ENCODE measurements at regions of chr11 and their contacts with region 1.

Region 1: GRCh38 chr11:1460396-1460985 is 26.1 kb downstream of the MOB2 start:
- DNase-seq: peak; percentile 48
- H3K4me3 ChIP-seq: peak overlapping the region; percentile 3 to 18
- H3K27ac ChIP-seq: peak overlapping the region; percentile 80
- H3K4me1 ChIP-seq: peaks cover 7% of the 10 kb centered on the region
- H3K27me3 ChIP-seq: no peaks in the 10 kb centered on the region
- CTCF ChIP-seq: no peak
- POLR2A ChIP-seq: no peak

Region 2: GRCh38 chr11:842370-843002 is 618.0 kb before region 1 on chr11 and contains the starts of genes POLR2L and TSPAN4:
- intact Hi-C with region 1: loop called (anchors 10 kb)
- DNase-seq: peak; percentile 83
- H3K4me3 ChIP-seq: peak within 1 kb of the TSS; percentile 82 to 94
- H3K27ac ChIP-seq: peak within 1 kb of the TSS; percentile 89 to 90
- H3K4me1 ChIP-seq: peaks cover 20% of the 10 kb centered on the region
- H3K27me3 ChIP-seq: no peaks in the 10 kb centered on the region
- CTCF ChIP-seq: peak in 2 of 4 experiments; percentile 19 to 34
- POLR2A ChIP-seq: peak; percentile 84
- total RNA-seq, gene POLR2L: 64.5 to 91.1 TPM
- total RNA-seq, gene TSPAN4: 48.8 to 94.9 TPM

Region 3: GRCh38 chr11:1486114-1486825 is 25.8 kb after region 1 on chr11 and contains the start of gene MOB2:
- intact Hi-C with region 1: loop called (anchors 2 kb)
- DNase-seq: no peak
- H3K4me3 ChIP-seq: peak within 1 kb of the TSS; percentile 9 to 17
- H3K27ac ChIP-seq: peak within 1 kb of the TSS; percentile 27 to 41
- H3K4me1 ChIP-seq: peaks cover 10% of the 10 kb centered on the region
- H3K27me3 ChIP-seq: no peaks in the 10 kb centered on the region
- CTCF ChIP-seq: peak in 1 of 4 experiments; percentile 12
- POLR2A ChIP-seq: no peak
- total RNA-seq, gene MOB2: 39.3 to 46.5 TPM

Region 4: GRCh38 chr11:1502954-1503707 is 42.6 kb after region 1 on chr11:
- intact Hi-C with region 1: no loop called
- DNase-seq: peak; percentile 88
- H3K4me3 ChIP-seq: no peak overlapping the region
- H3K27ac ChIP-seq: peak overlapping the region; percentile 64 to 75
- H3K4me1 ChIP-seq: peaks cover 36% of the 10 kb centered on the region
- H3K27me3 ChIP-seq: no peaks in the 10 kb centered on the region
- CTCF ChIP-seq: peak in 1 of 4 experiments; percentile 4
- POLR2A ChIP-seq: no peak

Region 5: DNA sequence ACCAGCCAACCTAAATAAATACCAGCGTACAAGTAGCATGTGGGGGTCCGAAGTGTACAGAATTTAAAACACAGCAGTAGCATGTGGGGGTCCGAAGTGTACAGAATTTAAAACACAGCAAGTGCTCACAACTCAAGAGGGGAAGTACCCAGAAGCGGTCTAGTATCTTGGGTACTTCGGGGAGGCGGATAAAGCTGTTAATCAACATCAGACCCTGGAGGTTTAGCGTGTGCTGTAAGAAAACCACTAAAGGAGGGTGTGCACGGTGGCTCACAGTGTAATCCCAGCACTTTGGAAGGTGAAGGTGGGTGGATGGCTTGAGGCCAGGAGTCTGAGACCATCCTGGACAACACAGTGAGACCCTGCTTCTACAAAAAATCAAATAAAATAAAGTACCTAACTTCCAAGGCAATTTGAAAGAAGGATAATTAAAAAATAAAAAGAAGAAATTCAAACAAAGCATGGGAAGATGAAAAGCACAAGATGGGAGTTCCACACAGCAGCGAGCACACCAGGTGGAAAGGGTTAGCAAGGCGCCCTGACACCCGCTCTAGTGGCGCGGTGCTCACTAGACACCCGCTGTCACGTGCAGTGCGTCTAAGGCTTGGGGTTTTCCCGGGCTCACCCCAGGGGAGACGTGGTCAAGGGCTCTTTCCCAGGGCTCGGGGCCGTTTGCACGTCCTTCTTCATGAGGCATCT is 61.0 kb after region 1 on chr11:
- intact Hi-C with region 1: no loop called
- DNase-seq: no peak
- H3K4me3 ChIP-seq: no peak overlapping the region
- H3K27ac ChIP-seq: no peak overlapping the region
- H3K4me1 ChIP-seq: no peaks in the 10 kb centered on the region
- H3K27me3 ChIP-seq: no peaks in the 10 kb centered on the region
- CTCF ChIP-seq: no peak
- POLR2A ChIP-seq: no peak